K562 (cell line): ENCODE measurements at regions of chr22 and their contacts with region 1.

Region 1: GRCh38 chr22:22060200-22061084 is 77.9 kb upstream of the TOP3B start:
- DNase-seq: peak; percentile 96 to 99 (median 98)
- ATAC-seq: peak; percentile 97
- H3K4me3 ChIP-seq: no peak overlapping the region
- H3K27ac ChIP-seq: no peak overlapping the region
- H3K4me1 ChIP-seq: peaks cover 3 to 5% of the 10 kb centered on the region in 2 experiments; a peak in 3 of 5 replicates
- H3K27me3 ChIP-seq: peaks cover 36 to 37% of the 10 kb centered on the region in 2 experiments
- CTCF ChIP-seq: peak in 1 of 3 experiments; percentile 99; a peak in 2 of 6 replicates
- EP300 ChIP-seq: peak; percentile 35
- POLR2A ChIP-seq: no peak
- RAD21 ChIP-seq: peak in 1 of 2 experiments; percentile 65; a peak in 2 of 4 replicates

Region 2: DNA sequence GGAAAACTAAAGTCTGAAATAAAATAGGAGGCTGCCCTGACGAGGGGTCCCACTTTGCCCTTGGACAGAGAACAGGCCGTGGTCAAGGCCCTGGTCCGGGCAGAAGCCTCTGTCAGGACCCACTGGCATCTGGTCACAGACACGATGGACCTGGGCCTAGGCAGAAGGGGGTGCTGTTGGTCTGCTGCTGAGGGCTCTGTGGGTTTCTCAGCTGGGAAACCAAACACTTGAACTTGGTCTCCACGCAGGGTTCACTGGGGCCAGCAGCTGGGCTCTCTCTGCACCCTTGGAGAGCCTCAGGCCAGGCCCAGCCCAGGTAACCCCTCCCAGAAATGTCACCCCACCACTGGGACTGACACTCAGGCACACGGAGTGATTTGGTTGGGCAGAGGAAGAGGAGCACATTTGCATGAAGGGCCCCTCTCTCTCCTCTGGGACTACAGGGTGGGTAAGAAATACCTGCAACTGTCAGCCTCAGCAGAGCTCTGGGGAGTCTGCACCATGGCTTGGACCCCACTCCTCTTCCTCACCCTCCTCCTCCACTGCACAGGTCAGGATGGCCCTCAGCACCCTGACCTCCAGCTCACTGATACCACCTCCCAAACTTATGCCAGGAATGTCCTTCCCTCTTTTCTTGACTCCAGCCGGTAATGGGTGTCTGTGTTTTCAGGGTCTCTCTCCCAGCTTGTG is 29.8 kb before region 1 on chr22:
- CTCF ChIA-PET with region 1: interaction called, 11 read pairs
- POLR2A ChIA-PET with region 1: interaction called, 10 read pairs
- in situ Hi-C with region 1: no loop called
- intact Hi-C with region 1: no loop called
- DNase-seq: peak; percentile 69 to 90 (median 80)
- ATAC-seq: peak; percentile 83
- H3K4me3 ChIP-seq: no peak overlapping the region
- H3K27ac ChIP-seq: no peak overlapping the region
- H3K4me1 ChIP-seq: peaks cover 3 to 10% of the 10 kb centered on the region in 2 experiments; a peak in 4 of 5 replicates
- H3K27me3 ChIP-seq: peaks cover 12 to 44% of the 10 kb centered on the region in 2 experiments; a peak in 4 of 5 replicates
- CTCF ChIP-seq: no peak
- EP300 ChIP-seq: no peak
- POLR2A ChIP-seq: no peak
- RAD21 ChIP-seq: no peak

Region 3: GRCh38 chr22:22074634-22075381 is 14.4 kb after region 1 on chr22:
- CTCF ChIA-PET with region 1: interaction called, 3 read pairs
- POLR2A ChIA-PET with region 1: interaction called, 23 read pairs
- in situ Hi-C with region 1: no loop called
- intact Hi-C with region 1: no loop called
- DNase-seq: no peak
- ATAC-seq: peak; percentile 12
- H3K4me3 ChIP-seq: no peak overlapping the region
- H3K27ac ChIP-seq: no peak overlapping the region
- H3K4me1 ChIP-seq: peaks cover 0 to 5% of the 10 kb centered on the region in 2 experiments; a peak in 1 of 5 replicates
- H3K27me3 ChIP-seq: peaks cover 37 to 57% of the 10 kb centered on the region in 2 experiments
- CTCF ChIP-seq: no peak
- EP300 ChIP-seq: no peak
- POLR2A ChIP-seq: no peak
- RAD21 ChIP-seq: no peak

Region 4: GRCh38 chr22:22156716-22157347 is 96.4 kb after region 1 on chr22:
- CTCF ChIA-PET with region 1: interaction called, 14 read pairs
- POLR2A ChIA-PET with region 1: interaction called, 4 read pairs
- in situ Hi-C with region 1: no loop called
- intact Hi-C with region 1: loop called (anchors 5 kb)
- DNase-seq: peak; percentile 98 to 100 (median 99)
- ATAC-seq: peak; percentile 98
- H3K4me3 ChIP-seq: no peak overlapping the region
- H3K27ac ChIP-seq: peak overlapping the region; percentile 1; the same call in 1 of the 3 replicates
- H3K4me1 ChIP-seq: peaks cover 0 to 4% of the 10 kb centered on the region in 2 experiments; a peak in 1 of 5 replicates
- H3K27me3 ChIP-seq: peaks cover 8 to 9% of the 10 kb centered on the region in 2 experiments
- CTCF ChIP-seq: peak in 1 of 3 experiments; percentile 99; a peak in 2 of 6 replicates
- EP300 ChIP-seq: peak; percentile 79
- POLR2A ChIP-seq: no peak
- RAD21 ChIP-seq: no peak

Region 5: DNA sequence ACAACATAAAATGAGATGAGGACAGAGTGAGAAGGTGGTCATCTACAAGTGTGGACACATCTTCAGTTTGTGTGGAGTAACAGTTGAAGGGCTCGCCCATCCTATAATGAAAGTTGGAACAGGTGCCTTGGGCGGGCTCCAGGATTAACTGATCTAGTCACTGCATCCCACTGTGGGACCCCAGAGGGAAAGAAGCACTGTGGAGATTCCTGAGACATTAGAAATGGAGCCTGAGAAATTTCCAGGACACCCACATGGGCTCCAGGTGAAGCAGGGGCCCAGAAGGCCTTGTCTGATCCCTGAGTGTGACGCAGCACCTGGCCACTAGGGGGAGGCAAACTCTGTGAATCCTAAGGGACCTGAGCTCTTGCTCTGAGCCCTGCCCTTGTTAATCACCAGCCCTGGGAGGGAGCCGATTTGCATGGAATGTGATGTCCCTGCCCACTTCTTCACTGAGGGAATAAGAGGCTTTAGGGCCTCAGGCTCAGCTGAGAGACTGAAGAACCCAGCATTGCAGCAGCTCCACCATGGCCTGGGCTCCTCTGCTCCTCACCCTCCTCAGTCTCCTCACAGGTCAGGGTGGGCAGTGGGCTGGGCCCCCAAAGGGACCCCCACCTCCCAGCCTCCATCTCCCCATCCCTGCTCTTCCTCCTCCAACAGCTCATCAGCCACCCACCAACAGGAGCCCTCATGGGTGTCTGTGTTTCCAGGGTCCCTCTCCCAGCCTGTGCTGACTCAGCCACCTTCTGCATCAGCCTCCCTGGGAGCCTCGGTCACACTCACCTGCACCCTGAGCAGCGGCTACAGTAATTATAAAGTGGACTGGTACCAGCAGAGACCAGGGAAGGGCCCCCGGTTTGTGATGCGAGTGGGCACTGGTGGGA is 282.5 kb after region 1 on chr22:
- CTCF ChIA-PET with region 1: no interaction called
- POLR2A ChIA-PET with region 1: interaction called, 3 read pairs
- in situ Hi-C with region 1: no loop called
- intact Hi-C with region 1: loop called (anchors 5 kb)
- DNase-seq: peak; percentile 95 to 99 (median 98)
- ATAC-seq: peak; percentile 98
- H3K4me3 ChIP-seq: no peak overlapping the region
- H3K27ac ChIP-seq: no peak overlapping the region
- H3K4me1 ChIP-seq: no peaks in the 10 kb centered on the region
- H3K27me3 ChIP-seq: peaks cover 11 to 33% of the 10 kb centered on the region in 2 experiments; a peak in 3 of 5 replicates
- CTCF ChIP-seq: peak in 2 of 3 experiments; percentile 99 to 100; a peak in 4 of 6 replicates
- EP300 ChIP-seq: no peak
- POLR2A ChIP-seq: no peak
- RAD21 ChIP-seq: peak in 1 of 2 experiments; percentile 92; a peak in 2 of 4 replicates